ENCODE measurements at regions of chr14 and their contacts with region 1.

Region 1: GRCh38 chr14:25833341-25834126 is 764.3 kb downstream of the NOVA1 start:
- DNase-seq: peak; percentile 87
- H3K4me3 ChIP-seq: no peak overlapping the region
- H3K27ac ChIP-seq: no peak overlapping the region
- H3K4me1 ChIP-seq: peaks cover 47% of the 10 kb centered on the region
- H3K27me3 ChIP-seq: no peaks in the 10 kb centered on the region
- CTCF ChIP-seq: peak; percentile 90

Region 2: DNA sequence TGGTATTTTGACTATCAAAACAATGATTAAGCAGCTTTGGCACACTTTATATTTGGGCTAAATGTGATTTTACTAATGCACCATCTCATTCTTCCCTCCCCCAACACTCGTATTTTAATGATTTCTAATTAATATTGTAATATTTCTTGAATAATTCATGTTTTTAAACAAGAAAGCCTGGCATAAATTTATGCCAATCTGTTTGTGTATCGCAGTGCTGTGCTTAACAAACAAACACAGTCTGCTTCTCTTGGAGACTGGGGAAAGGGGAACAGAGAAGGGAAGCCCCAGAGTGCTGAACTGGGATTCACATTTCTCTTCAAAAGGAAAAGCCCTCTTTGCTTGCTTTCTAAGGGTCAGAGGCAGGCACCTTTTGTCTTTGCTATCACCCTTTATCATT is 286.7 kb before region 1 on chr14:
- CTCF ChIA-PET with region 1: no interaction called
- POLR2A ChIA-PET with region 1: no interaction called
- intact Hi-C with region 1: no loop called
- DNase-seq: no peak
- H3K4me3 ChIP-seq: no peak overlapping the region
- H3K27ac ChIP-seq: no peak overlapping the region
- H3K4me1 ChIP-seq: no peaks in the 10 kb centered on the region
- H3K27me3 ChIP-seq: no peaks in the 10 kb centered on the region
- CTCF ChIP-seq: no peak

Region 3: GRCh38 chr14:25607192-25607591 is 226.3 kb before region 1 on chr14:
- CTCF ChIA-PET with region 1: no interaction called
- POLR2A ChIA-PET with region 1: no interaction called
- intact Hi-C with region 1: loop called (anchors 10 kb)
- DNase-seq: peak; percentile 51
- H3K4me3 ChIP-seq: no peak overlapping the region
- H3K27ac ChIP-seq: no peak overlapping the region
- H3K4me1 ChIP-seq: no peaks in the 10 kb centered on the region
- H3K27me3 ChIP-seq: no peaks in the 10 kb centered on the region
- CTCF ChIP-seq: peak; percentile 53; the same call in 1 of the 2 replicates

Region 4: GRCh38 chr14:26056217-26056616 is 222.7 kb after region 1 on chr14:
- CTCF ChIA-PET with region 1: no interaction called
- POLR2A ChIA-PET with region 1: no interaction called
- intact Hi-C with region 1: loop called (anchors 10 kb)
- DNase-seq: no peak
- H3K4me3 ChIP-seq: no peak overlapping the region
- H3K27ac ChIP-seq: no peak overlapping the region
- H3K4me1 ChIP-seq: peaks cover 17% of the 10 kb centered on the region
- H3K27me3 ChIP-seq: no peaks in the 10 kb centered on the region
- CTCF ChIP-seq: no peak

Region 5: GRCh38 chr14:26276757-26277156 is 443.2 kb after region 1 on chr14:
- CTCF ChIA-PET with region 1: no interaction called
- POLR2A ChIA-PET with region 1: no interaction called
- intact Hi-C with region 1: loop called (anchors 2 kb)
- DNase-seq: peak; percentile 62
- H3K4me3 ChIP-seq: no peak overlapping the region
- H3K27ac ChIP-seq: no peak overlapping the region
- H3K4me1 ChIP-seq: no peaks in the 10 kb centered on the region
- H3K27me3 ChIP-seq: no peaks in the 10 kb centered on the region
- CTCF ChIP-seq: peak; percentile 74

Region 6: GRCh38 chr14:26730929-26731618 is 897.5 kb after region 1 on chr14:
- CTCF ChIA-PET with region 1: no interaction called
- POLR2A ChIA-PET with region 1: no interaction called
- intact Hi-C with region 1: loop called (anchors 10 kb)
- DNase-seq: peak; percentile 54
- H3K4me3 ChIP-seq: no peak overlapping the region
- H3K27ac ChIP-seq: no peak overlapping the region
- H3K4me1 ChIP-seq: no peaks in the 10 kb centered on the region
- H3K27me3 ChIP-seq: no peaks in the 10 kb centered on the region
- CTCF ChIP-seq: peak; percentile 78

Measured in A673 (cell line).